PC-9 (cell line): ENCODE measurements at regions of chr10 and their contacts with region 1.

Region 1: GRCh38 chr10:92110039-92110794 is 180.7 kb downstream of the CPEB3 start:
- DNase-seq: no peak
- H3K4me3 ChIP-seq: no peak overlapping the region
- H3K27ac ChIP-seq: no peak overlapping the region
- H3K4me1 ChIP-seq: no peaks in the 10 kb centered on the region
- H3K27me3 ChIP-seq: no peaks in the 10 kb centered on the region
- CTCF ChIP-seq: no peak

Region 2: DNA sequence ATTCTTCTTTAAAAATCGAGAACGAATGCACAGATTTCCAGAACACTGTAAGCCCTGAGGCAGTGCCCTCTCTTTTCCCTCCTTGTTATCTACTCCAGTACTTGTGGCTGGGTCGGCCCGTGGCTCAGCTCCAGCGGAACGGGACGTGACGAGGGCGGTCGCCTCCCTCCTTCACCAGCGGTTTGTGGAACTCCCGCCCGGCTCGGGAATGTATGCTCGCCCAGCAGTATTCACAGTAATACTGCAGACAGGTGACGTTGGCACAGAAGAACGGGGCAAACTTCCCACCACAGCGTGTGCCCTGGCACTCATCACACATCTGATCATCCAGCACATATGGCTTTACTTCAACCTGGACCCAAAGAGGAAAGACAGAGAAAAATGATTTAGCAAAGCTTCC is 58.1 kb before region 1 on chr10:
- CTCF ChIA-PET with region 1: no interaction called
- POLR2A ChIA-PET with region 1: no interaction called
- intact Hi-C with region 1: no loop called
- DNase-seq: no peak
- H3K4me3 ChIP-seq: no peak overlapping the region
- H3K27ac ChIP-seq: no peak overlapping the region
- H3K4me1 ChIP-seq: no peaks in the 10 kb centered on the region
- H3K27me3 ChIP-seq: no peaks in the 10 kb centered on the region
- CTCF ChIP-seq: no peak

Region 3: GRCh38 chr10:92126100-92126650 is 16.0 kb after region 1 on chr10:
- CTCF ChIA-PET with region 1: no interaction called
- POLR2A ChIA-PET with region 1: no interaction called
- intact Hi-C with region 1: no loop called
- DNase-seq: no peak
- H3K4me3 ChIP-seq: no peak overlapping the region
- H3K27ac ChIP-seq: no peak overlapping the region
- H3K4me1 ChIP-seq: peaks cover 54% of the 10 kb centered on the region
- H3K27me3 ChIP-seq: no peaks in the 10 kb centered on the region
- CTCF ChIP-seq: no peak

Region 4: DNA sequence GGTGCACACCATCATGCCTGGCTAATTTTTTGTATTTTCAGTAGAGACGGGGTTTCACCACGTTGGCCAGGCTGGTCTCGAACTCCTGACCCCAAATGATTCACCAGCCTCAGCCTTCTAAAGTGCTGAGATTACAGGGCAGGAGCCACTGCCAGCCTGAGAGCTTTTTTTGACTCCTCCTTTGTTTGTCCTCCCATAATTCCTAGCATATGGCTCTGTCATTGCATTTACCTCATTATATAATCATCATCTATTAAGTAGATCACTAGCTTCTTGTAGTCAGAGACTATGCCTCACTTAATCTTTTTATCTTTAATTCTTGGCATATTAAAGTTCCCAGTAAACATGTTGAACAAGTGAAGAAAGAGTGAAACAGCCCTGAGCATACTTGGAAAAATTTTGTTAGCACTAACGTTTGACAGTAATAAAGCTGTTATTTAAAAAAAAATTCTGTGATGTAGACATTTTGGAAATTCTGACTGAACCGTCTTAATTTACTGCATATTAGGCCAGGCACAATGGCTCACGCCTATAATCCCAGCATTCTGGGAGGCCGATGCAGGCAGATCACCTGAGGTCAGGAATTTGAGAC is 98.6 kb after region 1 on chr10:
- CTCF ChIA-PET with region 1: interaction called, 17 read pairs
- POLR2A ChIA-PET with region 1: no interaction called
- intact Hi-C with region 1: no loop called
- DNase-seq: peak in 1 of 2 experiments; percentile 39
- H3K4me3 ChIP-seq: no peak overlapping the region
- H3K27ac ChIP-seq: no peak overlapping the region
- H3K4me1 ChIP-seq: peaks cover 6% of the 10 kb centered on the region
- H3K27me3 ChIP-seq: no peaks in the 10 kb centered on the region
- CTCF ChIP-seq: no peak

Region 5: DNA sequence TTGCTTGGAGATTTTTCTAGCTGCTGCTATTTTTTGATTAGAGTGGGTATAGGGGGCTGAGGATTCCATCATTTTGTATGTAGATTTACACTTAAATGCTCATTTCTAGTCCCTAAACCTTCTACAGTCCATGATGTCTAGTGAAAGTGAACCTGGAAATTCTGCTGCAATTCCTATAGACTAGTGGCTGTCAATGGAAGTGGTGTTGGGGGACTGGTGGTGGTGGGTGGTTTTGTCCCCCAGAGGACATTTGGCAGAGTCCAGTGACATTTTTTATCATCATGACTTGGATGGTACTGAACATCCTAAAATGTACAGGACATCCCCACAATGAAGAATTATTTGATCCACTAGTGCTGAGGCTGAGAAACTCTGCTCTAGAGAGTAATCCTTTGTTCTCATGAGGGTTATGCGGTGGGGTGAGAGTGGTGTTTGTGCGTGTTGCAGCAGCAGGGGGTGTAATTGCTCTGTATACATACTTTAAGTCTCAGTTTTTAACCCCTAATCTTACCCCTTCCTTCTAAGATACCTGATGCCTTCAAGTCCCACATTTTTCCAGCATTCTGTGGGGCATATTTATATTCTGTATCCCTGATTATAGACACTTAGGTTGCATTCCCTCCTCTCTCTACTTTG is 517.7 kb after region 1 on chr10:
- CTCF ChIA-PET with region 1: interaction called, 11 read pairs
- POLR2A ChIA-PET with region 1: no interaction called
- intact Hi-C with region 1: no loop called
- DNase-seq: no peak
- H3K4me3 ChIP-seq: no peak overlapping the region
- H3K27ac ChIP-seq: no peak overlapping the region
- H3K4me1 ChIP-seq: no peaks in the 10 kb centered on the region
- H3K27me3 ChIP-seq: no peaks in the 10 kb centered on the region
- CTCF ChIP-seq: no peak